Mammary epithelial cell (primary cell): ENCODE measurements at regions of chr19 and their contacts with region 1.

Region 1: GRCh38 chr19:18542936-18543815 is at the start of gene FKBP8:
- DNase-seq: peak; percentile 73
- H3K4me3 ChIP-seq: peak within 1 kb of the TSS; percentile 71 to 81 (median 81)
- H3K27ac ChIP-seq: peak within 1 kb of the TSS; percentile 45
- H3K4me1 ChIP-seq: no peaks in the 10 kb centered on the region
- H3K27me3 ChIP-seq: no peaks in the 10 kb centered on the region
- CTCF ChIP-seq: no peak
- total RNA-seq, gene FKBP8: 201 to 213 TPM

Region 2: GRCh38 chr19:18557474-18558201 is 14.5 kb after region 1 on chr19 and contains the start of gene KXD1:
- CTCF ChIA-PET with region 1: interaction called, 4 read pairs
- dilution Hi-C with region 1: no loop called
- in situ Hi-C with region 1: no loop called
- intact Hi-C with region 1: loop called (anchors 2 kb)
- DNase-seq: peak; percentile 94
- H3K4me3 ChIP-seq: peak within 1 kb of the TSS; percentile 69 to 83 (median 81)
- H3K27ac ChIP-seq: peak within 1 kb of the TSS; percentile 73
- H3K4me1 ChIP-seq: no peaks in the 10 kb centered on the region
- H3K27me3 ChIP-seq: no peaks in the 10 kb centered on the region
- CTCF ChIP-seq: no peak
- total RNA-seq, gene KXD1: 83.9 to 98.2 TPM

Region 3: DNA sequence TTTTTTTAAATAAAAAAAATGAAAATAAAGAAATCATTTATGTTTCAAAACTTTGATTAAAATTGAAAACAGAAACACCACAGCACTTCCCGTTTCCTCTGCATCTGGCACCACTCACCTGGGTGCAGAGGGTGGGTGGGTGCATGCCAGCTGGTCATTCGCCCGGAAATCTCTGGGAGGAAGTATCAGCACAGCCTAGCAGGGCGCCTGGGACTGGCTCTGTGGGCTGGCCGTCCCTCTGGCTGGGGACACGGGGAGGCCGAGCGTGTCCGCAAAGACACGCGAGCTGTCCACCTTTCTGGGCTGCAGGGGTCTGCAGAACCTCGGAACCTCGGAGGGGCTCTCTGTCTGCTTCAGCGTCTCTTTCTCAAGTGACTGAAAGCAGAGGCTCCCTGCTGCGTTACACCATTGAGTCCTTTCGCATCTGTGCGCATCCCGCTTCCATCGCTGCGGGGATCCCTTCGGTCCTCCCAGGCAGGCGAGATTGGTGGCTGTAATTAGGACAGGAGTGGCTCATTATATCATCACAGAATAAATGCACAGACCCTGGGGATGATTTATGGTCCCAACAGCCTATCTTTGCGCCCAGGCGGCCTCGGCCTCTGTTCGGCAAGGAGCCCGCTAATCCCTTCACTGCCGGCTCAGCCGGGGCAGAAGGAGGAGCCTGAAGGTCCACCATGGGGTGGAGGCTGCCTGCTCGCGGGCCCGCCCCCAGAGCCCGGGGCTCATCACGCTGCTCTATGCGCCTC is 157.5 kb after region 1 on chr19:
- CTCF ChIA-PET with region 1: no interaction called
- dilution Hi-C with region 1: no loop called
- in situ Hi-C with region 1: no loop called
- intact Hi-C with region 1: no loop called
- DNase-seq: peak; percentile 59
- H3K4me3 ChIP-seq: peak overlapping the region; percentile 20 to 34 (median 25)
- H3K27ac ChIP-seq: no peak overlapping the region
- H3K4me1 ChIP-seq: peaks cover 24% of the 10 kb centered on the region
- H3K27me3 ChIP-seq: no peaks in the 10 kb centered on the region
- CTCF ChIP-seq: no peak